ENCODE measurements at regions of chr17 and their contacts with region 1.

Region 1: GRCh38 chr17:7931709-7932482 is at the starts of genes CNTROB and TRAPPC1:
- DNase-seq: peak; percentile 99

Region 2: GRCh38 chr17:7832431-7832830 is 99.5 kb before region 1 on chr17:
- CTCF ChIA-PET with region 1: no interaction called
- POLR2A ChIA-PET with region 1: no interaction called
- DNase-seq: no peak

Region 3: DNA sequence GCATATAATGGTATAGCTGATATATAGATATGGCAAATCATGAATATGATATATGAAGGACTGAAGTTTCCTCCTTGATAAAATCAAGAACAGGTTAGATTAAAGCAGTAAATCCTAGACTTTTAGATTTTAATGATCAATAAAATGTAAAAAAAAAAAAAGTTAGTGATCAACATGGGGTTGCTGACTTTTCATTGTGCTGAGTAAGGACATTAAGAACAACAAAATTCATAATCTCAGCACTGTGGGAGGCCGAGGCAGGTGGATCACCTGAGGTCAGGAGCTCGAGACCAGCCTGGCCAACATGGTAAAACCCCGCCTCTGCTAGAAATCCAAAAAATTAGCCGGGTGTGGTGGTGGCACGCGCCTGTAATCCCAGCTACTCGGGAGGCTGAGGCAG is 53.7 kb before region 1 on chr17:
- CTCF ChIA-PET with region 1: no interaction called
- POLR2A ChIA-PET with region 1: no interaction called
- DNase-seq: no peak

Region 4: DNA sequence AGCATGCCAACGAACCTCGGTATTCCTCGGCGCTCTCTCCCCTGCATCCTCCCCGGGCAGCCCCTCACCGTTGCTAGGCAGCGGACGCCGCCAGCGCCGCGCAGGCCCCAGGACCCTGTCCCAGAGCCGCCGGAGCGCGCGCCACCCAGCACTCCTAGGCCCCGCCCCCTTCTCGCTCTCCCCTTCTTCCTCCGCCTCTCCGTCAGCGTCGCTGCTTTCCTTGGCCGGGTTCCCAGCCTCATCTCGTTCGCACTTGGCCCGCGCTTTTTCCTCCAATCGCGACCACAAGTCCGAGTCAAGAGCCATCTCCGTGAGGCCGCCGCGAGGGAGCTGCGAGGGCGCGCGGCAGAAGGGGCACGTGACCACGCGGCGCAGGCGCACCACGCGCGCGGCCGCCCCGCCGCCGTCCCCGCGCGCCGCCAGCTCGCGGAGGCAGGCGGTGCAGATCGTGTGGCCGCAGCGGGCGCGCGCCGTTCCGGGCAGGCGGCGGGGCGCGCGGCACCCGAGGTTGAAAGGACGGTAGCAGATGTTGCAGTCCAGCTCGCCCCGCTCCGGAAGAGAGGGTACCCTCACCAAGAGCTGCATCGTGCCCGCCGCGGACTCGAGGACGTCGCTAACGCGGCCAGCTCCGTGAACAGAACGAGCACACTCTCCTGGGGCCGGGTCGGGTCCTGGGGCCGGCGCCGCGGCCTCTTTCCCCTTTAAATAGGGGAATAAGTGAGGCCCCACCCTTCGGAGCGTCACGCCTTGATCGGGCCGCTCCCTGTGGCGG is 16.1 kb before region 1 on chr17 and contains the start of gene RNF227:
- CTCF ChIA-PET with region 1: interaction called, 3 read pairs
- POLR2A ChIA-PET with region 1: interaction called, 69 read pairs
- DNase-seq: peak; percentile 83

Region 5: GRCh38 chr17:7947651-7948050 is 15.8 kb after region 1 on chr17:
- CTCF ChIA-PET with region 1: interaction called, 4 read pairs
- POLR2A ChIA-PET with region 1: interaction called, 48 read pairs
- DNase-seq: no peak

Region 6: DNA sequence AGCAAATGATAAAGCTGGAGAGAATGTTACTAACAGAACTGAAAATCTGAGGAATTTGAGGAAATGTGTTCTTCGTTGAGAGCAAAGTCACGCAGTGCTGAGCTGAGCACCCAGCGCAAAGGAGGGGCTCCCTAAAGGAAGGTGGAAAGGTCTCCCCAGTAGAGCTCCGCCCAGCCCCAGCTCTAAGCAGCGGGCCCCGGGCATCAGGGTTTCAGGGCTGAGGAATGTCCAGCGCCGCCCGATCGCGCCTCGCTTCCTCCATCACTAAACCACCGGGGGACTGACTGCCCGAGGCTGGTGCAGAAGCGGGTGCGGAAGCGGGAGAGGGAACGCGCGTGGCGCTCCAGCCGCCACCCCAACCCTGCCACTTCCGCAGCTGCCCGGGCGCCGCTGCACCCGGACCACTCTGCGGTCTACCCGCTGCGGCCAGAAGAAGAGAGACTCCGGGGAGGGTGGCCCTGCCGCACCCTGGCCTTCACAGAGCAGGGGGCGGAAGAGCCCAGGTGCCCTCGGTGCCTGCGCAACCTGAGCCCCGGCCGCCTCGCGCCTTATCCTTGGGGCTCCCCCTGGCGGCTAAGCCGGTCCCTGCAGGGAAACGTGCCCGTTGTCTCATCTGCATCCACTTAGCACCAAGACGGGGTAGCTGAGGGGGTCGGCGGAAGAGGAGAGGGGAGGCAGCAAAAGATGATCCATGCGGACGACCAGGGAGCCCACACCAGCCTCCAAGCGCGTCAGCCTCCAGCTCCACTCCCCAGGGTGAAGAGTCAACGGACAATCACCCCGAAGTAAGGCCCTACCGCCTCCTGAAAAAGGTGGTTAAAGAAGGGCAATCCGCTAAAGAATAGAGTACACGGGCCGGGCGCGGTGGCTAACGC is 58.1 kb after region 1 on chr17:
- CTCF ChIA-PET with region 1: interaction called, 10 read pairs
- POLR2A ChIA-PET with region 1: interaction called, 21 read pairs
- DNase-seq: peak; percentile 89

Region 7: GRCh38 chr17:8156246-8156992 is 224.5 kb after region 1 on chr17:
- CTCF ChIA-PET with region 1: no interaction called
- POLR2A ChIA-PET with region 1: no interaction called
- DNase-seq: peak; percentile 90